HEK293 (cell line): ENCODE measurements at regions of chr17 and their contacts with region 1.

Region 1: GRCh38 chr17:30336369-30337171 is 2.7 kb upstream of the TMIGD1 start:
- H3K4me3 ChIP-seq: no peak overlapping the region
- H3K27ac ChIP-seq: no peak overlapping the region
- H3K4me1 ChIP-seq: peaks cover 4% of the 10 kb centered on the region
- CTCF ChIP-seq: peak; percentile 23; the same call in 1 of the 2 replicates

Region 2: GRCh38 chr17:30124273-30124796 is 212.2 kb before region 1 on chr17:
- CTCF ChIA-PET with region 1: interaction called, 116 read pairs
- POLR2A ChIA-PET with region 1: interaction called, 5 read pairs
- H3K4me3 ChIP-seq: no peak overlapping the region
- H3K27ac ChIP-seq: no peak overlapping the region
- H3K4me1 ChIP-seq: no peaks in the 10 kb centered on the region
- CTCF ChIP-seq: no peak

Region 3: GRCh38 chr17:30291543-30292285 is 44.9 kb before region 1 on chr17 and contains the start of gene BLMH:
- CTCF ChIA-PET with region 1: interaction called, 26 read pairs
- POLR2A ChIA-PET with region 1: interaction called, 6 read pairs
- H3K4me3 ChIP-seq: peak within 1 kb of the TSS; percentile 88
- H3K27ac ChIP-seq: peak within 1 kb of the TSS; percentile 85
- H3K4me1 ChIP-seq: no peaks in the 10 kb centered on the region; the same call in 1 of the 2 replicates
- CTCF ChIP-seq: no peak

Region 4: DNA sequence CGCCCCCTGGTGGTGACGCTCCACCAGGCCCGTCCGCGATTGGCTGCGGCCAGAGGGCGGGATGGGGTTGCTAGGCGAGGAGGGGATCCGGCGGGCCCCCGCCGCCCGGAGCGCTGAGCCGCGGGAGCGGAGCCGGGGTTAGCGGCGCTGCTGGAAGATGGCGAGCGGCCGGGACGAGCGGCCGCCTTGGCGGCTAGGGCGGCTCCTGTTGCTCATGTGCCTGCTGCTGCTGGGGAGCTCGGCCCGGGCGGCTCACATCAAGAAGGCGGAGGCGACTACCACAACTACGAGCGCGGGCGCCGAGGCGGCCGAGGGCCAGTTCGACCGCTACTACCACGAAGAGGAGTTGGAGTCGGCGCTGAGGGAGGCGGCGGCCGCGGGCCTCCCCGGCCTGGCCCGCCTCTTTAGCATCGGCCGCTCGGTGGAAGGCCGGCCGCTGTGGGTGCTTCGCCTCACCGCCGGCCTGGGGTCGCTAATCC is 42.3 kb after region 1 on chr17 and contains the start of gene CPD:
- CTCF ChIA-PET with region 1: interaction called, 11 read pairs
- POLR2A ChIA-PET with region 1: no interaction called
- H3K4me3 ChIP-seq: peak within 1 kb of the TSS; percentile 88
- H3K27ac ChIP-seq: peak within 1 kb of the TSS; percentile 86
- H3K4me1 ChIP-seq: peaks cover 36% of the 10 kb centered on the region
- CTCF ChIP-seq: no peak

Region 5: GRCh38 chr17:30520436-30520835 is 183.9 kb after region 1 on chr17:
- CTCF ChIA-PET with region 1: no interaction called
- POLR2A ChIA-PET with region 1: no interaction called
- H3K4me3 ChIP-seq: no peak overlapping the region
- H3K27ac ChIP-seq: no peak overlapping the region
- H3K4me1 ChIP-seq: no peaks in the 10 kb centered on the region
- CTCF ChIP-seq: no peak

Region 6: GRCh38 chr17:30716461-30717300 is 380.1 kb after region 1 on chr17:
- CTCF ChIA-PET with region 1: interaction called, 11 read pairs
- POLR2A ChIA-PET with region 1: no interaction called
- H3K4me3 ChIP-seq: no peak overlapping the region
- H3K27ac ChIP-seq: no peak overlapping the region
- H3K4me1 ChIP-seq: no peaks in the 10 kb centered on the region; the same call in 1 of the 2 replicates
- CTCF ChIP-seq: peak; percentile 40; the same call in 1 of the 2 replicates